ENCODE measurements at regions of chr5 and their contacts with region 1.

Region 1: GRCh38 chr5:54243473-54244080 is 66.8 kb downstream of the ARL15 start:
- DNase-seq: no peak
- ATAC-seq: peak; percentile 84
- H3K4me3 ChIP-seq: no peak overlapping the region
- H3K27ac ChIP-seq: no peak overlapping the region
- H3K4me1 ChIP-seq: no peaks in the 10 kb centered on the region
- H3K27me3 ChIP-seq: no peaks in the 10 kb centered on the region
- CTCF ChIP-seq: peak; percentile 57 to 72 (median 72); a peak in 5 of 6 replicates
- EP300 ChIP-seq: no peak
- POLR2A ChIP-seq: no peak
- RAD21 ChIP-seq: peak; percentile 86

Region 2: DNA sequence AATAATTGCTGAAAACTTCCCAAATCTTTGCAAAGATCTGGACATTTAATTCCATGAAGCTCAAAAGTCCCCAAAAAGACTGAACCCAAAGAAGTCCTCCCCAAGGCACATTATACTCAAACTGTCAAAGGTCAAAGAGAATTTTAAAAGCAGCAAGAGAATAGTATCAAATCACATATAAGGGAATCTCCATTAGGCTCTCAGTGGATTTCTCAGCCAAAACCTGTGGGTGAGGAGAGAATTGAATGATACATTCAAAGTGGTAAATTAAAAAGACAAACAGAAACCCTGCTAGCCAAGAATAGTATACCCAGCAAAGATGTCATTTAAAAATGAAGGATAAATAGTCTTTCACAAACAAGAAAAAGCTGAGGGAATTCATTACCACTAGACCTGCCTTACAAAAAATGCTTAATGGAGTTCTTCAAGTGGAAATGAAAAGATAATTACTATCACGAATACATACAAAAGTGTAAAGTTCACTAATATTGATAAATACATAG is 549.0 kb before region 1 on chr5:
- CTCF ChIA-PET with region 1: no interaction called
- POLR2A ChIA-PET with region 1: no interaction called
- RAD21 ChIA-PET with region 1: no interaction called
- SMC1A ChIA-PET with region 1: no interaction called
- in situ Hi-C with region 1: no loop called
- intact Hi-C with region 1: no loop called
- DNase-seq: no peak
- ATAC-seq: no peak
- H3K4me3 ChIP-seq: no peak overlapping the region
- H3K27ac ChIP-seq: no peak overlapping the region
- H3K4me1 ChIP-seq: no peaks in the 10 kb centered on the region
- H3K27me3 ChIP-seq: no peaks in the 10 kb centered on the region
- CTCF ChIP-seq: no peak
- EP300 ChIP-seq: no peak
- POLR2A ChIP-seq: no peak
- RAD21 ChIP-seq: no peak

Region 3: DNA sequence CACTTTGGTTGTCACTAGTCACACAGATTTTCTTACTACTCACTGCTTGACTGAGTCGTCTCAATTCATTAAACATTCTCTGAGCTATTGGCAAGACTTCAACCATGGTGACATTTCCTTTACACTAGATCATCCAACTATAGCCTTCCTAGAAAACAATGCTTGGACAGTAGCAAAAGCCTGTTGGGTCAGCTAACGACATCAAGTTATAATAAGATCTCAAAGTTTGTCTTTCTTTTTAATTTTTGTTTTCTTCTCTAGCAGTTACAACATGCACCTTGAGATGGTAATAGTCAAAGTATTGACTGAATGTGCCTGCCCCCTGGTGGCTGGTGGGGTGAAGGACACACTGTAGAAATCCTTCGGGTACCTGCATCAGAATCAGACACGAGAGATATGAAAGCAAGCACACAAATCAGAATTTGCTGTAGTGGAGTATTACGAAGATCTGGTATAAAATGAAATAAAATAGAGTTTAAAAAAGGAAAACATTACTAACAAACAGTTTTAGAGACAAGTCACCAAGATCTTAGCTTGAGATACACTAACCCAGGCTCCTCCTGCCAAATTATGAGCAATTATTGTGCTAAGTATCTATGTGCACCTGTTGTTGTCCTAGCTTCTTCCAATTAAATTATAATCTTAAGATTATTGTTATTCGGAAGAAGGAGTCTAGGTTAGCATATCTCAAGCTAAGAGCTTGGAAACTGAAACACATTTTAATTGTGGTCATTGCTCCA is 14.4 kb before region 1 on chr5:
- CTCF ChIA-PET with region 1: interaction called, 27 read pairs
- POLR2A ChIA-PET with region 1: no interaction called
- RAD21 ChIA-PET with region 1: interaction called, 9 read pairs
- SMC1A ChIA-PET with region 1: interaction called, 6 read pairs
- in situ Hi-C with region 1: no loop called
- intact Hi-C with region 1: no loop called
- DNase-seq: no peak
- ATAC-seq: peak; percentile 95
- H3K4me3 ChIP-seq: no peak overlapping the region
- H3K27ac ChIP-seq: no peak overlapping the region
- H3K4me1 ChIP-seq: no peaks in the 10 kb centered on the region
- H3K27me3 ChIP-seq: no peaks in the 10 kb centered on the region
- CTCF ChIP-seq: peak; percentile 86 to 94 (median 90)
- EP300 ChIP-seq: no peak
- POLR2A ChIP-seq: no peak
- RAD21 ChIP-seq: peak; percentile 89

Region 4: GRCh38 chr5:54315736-54316528 is 72.4 kb after region 1 on chr5:
- CTCF ChIA-PET with region 1: interaction called, 9 read pairs
- POLR2A ChIA-PET with region 1: no interaction called
- RAD21 ChIA-PET with region 1: interaction called, 11 read pairs
- SMC1A ChIA-PET with region 1: interaction called, 9 read pairs
- in situ Hi-C with region 1: no loop called
- intact Hi-C with region 1: loop called (anchors 5 kb)
- DNase-seq: no peak
- ATAC-seq: no peak
- H3K4me3 ChIP-seq: no peak overlapping the region
- H3K27ac ChIP-seq: no peak overlapping the region
- H3K4me1 ChIP-seq: no peaks in the 10 kb centered on the region
- H3K27me3 ChIP-seq: peaks cover 0 to 2% of the 10 kb centered on the region in 2 experiments; a peak in 2 of 4 replicates
- CTCF ChIP-seq: no peak
- EP300 ChIP-seq: no peak
- POLR2A ChIP-seq: no peak
- RAD21 ChIP-seq: no peak

Region 5: GRCh38 chr5:54421976-54422375 is 178.4 kb after region 1 on chr5:
- CTCF ChIA-PET with region 1: interaction called, 31 read pairs
- POLR2A ChIA-PET with region 1: no interaction called
- RAD21 ChIA-PET with region 1: interaction called, 13 read pairs
- SMC1A ChIA-PET with region 1: interaction called, 20 read pairs
- in situ Hi-C with region 1: no loop called
- intact Hi-C with region 1: loop called (anchors 1 kb)
- DNase-seq: no peak
- ATAC-seq: no peak
- H3K4me3 ChIP-seq: no peak overlapping the region
- H3K27ac ChIP-seq: no peak overlapping the region
- H3K4me1 ChIP-seq: no peaks in the 10 kb centered on the region
- H3K27me3 ChIP-seq: no peaks in the 10 kb centered on the region
- CTCF ChIP-seq: no peak
- EP300 ChIP-seq: no peak
- POLR2A ChIP-seq: no peak
- RAD21 ChIP-seq: no peak

Region 6: GRCh38 chr5:54867310-54867944 is 623.9 kb after region 1 on chr5:
- CTCF ChIA-PET with region 1: interaction called, 5 read pairs
- POLR2A ChIA-PET with region 1: no interaction called
- RAD21 ChIA-PET with region 1: no interaction called
- SMC1A ChIA-PET with region 1: interaction called, 4 read pairs
- in situ Hi-C with region 1: no loop called
- intact Hi-C with region 1: loop called (anchors 10 kb)
- DNase-seq: no peak
- ATAC-seq: peak; percentile 38; the same call in 1 of the 3 replicates
- H3K4me3 ChIP-seq: no peak overlapping the region
- H3K27ac ChIP-seq: no peak overlapping the region
- H3K4me1 ChIP-seq: no peaks in the 10 kb centered on the region
- H3K27me3 ChIP-seq: peaks cover 2 to 4% of the 10 kb centered on the region in 2 experiments; a peak in 2 of 4 replicates
- CTCF ChIP-seq: peak; percentile 36 to 47 (median 46); a peak in 5 of 6 replicates
- EP300 ChIP-seq: no peak
- POLR2A ChIP-seq: no peak
- RAD21 ChIP-seq: peak; percentile 56